OCI-LY7 (cell line): ENCODE measurements at regions of chr3 and their contacts with region 1.

Region 1: GRCh38 chr3:153043729-153044328 is 118.2 kb upstream of the RAP2B start:
- DNase-seq: no peak
- H3K4me3 ChIP-seq: no peak overlapping the region
- H3K27ac ChIP-seq: no peak overlapping the region
- H3K4me1 ChIP-seq: no peaks in the 10 kb centered on the region
- CTCF ChIP-seq: no peak

Region 2: DNA sequence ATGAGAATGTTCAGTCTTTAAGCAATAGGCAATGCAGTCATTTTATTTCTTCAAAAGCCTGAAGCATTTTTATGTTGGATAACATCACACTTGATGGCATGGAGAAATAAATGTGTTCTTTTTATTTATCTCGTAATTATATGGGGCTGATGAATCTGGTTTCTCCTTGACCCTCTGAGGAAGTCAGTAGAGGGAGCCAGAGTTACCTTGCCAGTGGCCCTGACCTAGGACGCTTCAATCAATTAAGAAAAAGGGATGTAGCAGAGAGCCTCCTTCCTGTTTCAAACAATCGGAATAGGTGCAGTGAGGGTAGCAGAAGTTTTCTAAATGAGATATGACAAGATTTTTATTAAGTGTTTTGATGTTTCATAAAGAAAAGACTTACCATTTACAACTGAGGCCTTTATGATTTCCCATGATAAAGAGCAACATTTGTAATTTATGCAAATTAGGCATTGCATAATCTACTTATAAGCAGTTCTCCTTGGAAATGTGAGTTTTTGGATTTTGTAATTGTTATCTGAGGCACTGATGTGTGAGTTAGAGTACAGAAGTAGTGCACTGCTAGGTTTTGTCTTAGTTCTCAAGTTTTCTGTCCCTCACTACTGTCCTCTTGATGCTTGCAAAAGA is 247.3 kb after region 1 on chr3:
- CTCF ChIA-PET with region 1: no interaction called
- POLR2A ChIA-PET with region 1: no interaction called
- intact Hi-C with region 1: loop called (anchors 2 kb)
- DNase-seq: peak; percentile 58
- H3K4me3 ChIP-seq: no peak overlapping the region
- H3K27ac ChIP-seq: no peak overlapping the region
- H3K4me1 ChIP-seq: no peaks in the 10 kb centered on the region
- CTCF ChIP-seq: peak; percentile 83

Region 3: DNA sequence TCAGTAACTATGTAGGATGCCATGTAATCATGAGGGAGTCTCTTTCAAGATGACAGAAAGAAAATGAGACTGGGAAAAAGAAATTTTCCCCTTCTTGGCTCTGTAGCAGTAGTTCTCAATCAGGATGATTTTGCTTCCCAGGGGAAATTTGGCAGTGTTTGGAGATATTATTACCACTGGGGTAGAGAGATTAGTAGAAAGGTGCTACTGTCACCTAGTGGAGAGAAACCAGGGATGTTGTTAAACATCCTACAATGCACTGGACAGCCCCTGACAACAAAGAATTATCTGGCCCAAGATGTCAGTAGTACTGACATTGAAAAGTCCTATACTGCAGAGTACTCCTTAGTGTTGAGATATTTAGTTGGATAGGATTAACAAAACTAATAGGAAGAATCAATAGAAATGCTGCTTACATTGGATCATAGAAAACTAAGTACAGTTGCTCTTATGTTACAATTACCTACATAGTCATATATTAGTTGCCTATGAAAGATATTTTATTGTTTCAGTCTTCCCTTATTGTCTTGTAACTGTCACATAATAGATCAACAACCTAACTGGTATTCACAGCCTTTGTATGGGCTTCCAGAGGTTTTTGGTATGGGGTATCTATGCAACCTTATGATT is 551.5 kb after region 1 on chr3:
- CTCF ChIA-PET with region 1: no interaction called
- POLR2A ChIA-PET with region 1: no interaction called
- intact Hi-C with region 1: loop called (anchors 10 kb)
- DNase-seq: peak; percentile 18
- H3K4me3 ChIP-seq: no peak overlapping the region
- H3K27ac ChIP-seq: no peak overlapping the region
- H3K4me1 ChIP-seq: no peaks in the 10 kb centered on the region
- CTCF ChIP-seq: peak; percentile 75

Region 4: GRCh38 chr3:153927107-153927506 is 883.3 kb after region 1 on chr3:
- CTCF ChIA-PET with region 1: no interaction called
- POLR2A ChIA-PET with region 1: no interaction called
- intact Hi-C with region 1: loop called (anchors 5 kb)
- DNase-seq: peak; percentile 17
- H3K4me3 ChIP-seq: no peak overlapping the region
- H3K27ac ChIP-seq: no peak overlapping the region
- H3K4me1 ChIP-seq: no peaks in the 10 kb centered on the region
- CTCF ChIP-seq: peak; percentile 65

Region 5: DNA sequence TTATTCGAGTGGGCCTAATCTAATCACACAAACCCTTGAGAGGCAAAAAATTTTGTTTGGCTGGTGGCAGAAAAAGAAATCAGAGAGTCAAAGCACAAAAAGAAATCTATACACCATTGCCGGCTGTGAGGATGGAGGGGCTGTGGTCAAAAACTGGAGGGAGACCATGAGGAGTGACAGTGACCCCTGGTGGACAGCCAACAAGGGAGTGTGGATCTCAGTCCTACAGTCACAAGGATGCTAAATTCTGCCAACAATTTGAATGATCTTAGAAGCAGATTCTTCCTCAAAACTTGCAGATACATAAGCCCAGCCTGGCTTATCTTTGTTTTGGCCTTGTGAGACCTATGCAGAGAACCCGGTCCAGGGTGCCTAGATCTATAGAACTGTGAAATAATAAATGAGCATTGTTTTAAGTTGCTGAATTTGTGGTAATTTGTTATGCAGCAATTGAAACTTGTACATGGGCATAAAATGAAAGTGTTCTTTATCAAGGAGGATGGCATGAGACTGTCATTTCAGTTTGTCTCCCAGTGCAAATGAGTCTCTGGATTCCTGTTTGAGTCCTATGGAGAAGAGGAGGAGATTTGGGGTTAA is 974.4 kb after region 1 on chr3:
- CTCF ChIA-PET with region 1: no interaction called
- POLR2A ChIA-PET with region 1: no interaction called
- intact Hi-C with region 1: loop called (anchors 5 kb)
- DNase-seq: peak; percentile 51
- H3K4me3 ChIP-seq: no peak overlapping the region
- H3K27ac ChIP-seq: no peak overlapping the region
- H3K4me1 ChIP-seq: no peaks in the 10 kb centered on the region
- CTCF ChIP-seq: peak; percentile 82